ENCODE measurements at regions of chr17 and their contacts with region 1.

Region 1: GRCh38 chr17:4304417-4305027 is 40.7 kb upstream of the ANKFY1 start:
- DNase-seq: peak in 34 of 42 donors; percentile 10 to 89 (median 61)

Region 2: GRCh38 chr17:4215882-4216570 is 88.5 kb before region 1 on chr17:
- intact Hi-C with region 1: loop called (anchors 5 kb)
- DNase-seq: no peak

Region 3: GRCh38 chr17:4249452-4250029 is 55.0 kb before region 1 on chr17:
- intact Hi-C with region 1: no loop called
- DNase-seq: no peak

Region 4: DNA sequence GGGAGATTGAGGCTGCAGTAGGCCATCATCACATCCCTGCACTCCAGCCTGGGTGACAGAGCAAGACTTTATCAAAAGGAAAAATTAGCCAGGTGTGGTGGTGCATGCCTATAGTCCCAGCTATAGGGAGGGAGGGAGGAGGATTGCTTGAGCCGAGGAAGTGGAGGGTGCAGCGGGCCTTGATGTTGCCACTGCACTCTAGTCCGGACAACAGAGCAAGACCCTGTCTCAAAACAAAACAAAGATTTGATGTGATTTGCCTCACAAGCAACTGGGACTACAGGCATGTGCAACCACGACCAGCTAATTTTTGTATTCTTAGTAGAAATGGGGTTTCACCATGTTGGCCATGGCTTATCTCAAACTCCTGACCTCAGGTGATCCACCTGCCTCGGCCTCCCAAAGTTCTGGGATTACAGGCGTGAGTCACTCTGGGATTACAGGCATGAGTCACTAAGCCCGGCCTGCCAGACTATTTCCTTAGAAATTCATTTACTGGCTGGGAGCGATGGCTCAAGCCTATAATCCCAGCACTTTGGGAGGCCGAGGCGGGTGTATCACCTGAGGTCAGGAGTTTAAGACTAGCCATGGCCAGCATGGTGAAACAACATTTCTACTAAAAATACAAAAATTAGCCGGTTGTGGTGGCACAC is 50.5 kb after region 1 on chr17:
- intact Hi-C with region 1: loop called (anchors 10 kb)
- DNase-seq: peak in 3 of 42 donors; percentile 9 to 24 (median 24)

Measured in head of caudate nucleus (tissue), 42 donors.